GM10248 (cell line): ENCODE measurements at regions of chr1 and their contacts with region 1.

Region 1: GRCh38 chr1:174174461-174175329 is 15.4 kb downstream of the RABGAP1L start:
- DNase-seq: no peak
- CTCF ChIP-seq: no peak

Region 2: GRCh38 chr1:174159252-174160108 is 15.2 kb before region 1 on chr1 and contains the start of gene RABGAP1L:
- CTCF ChIA-PET with region 1: interaction called, 14 read pairs
- POLR2A ChIA-PET with region 1: no interaction called
- DNase-seq: peak; percentile 90
- CTCF ChIP-seq: no peak

Region 3: DNA sequence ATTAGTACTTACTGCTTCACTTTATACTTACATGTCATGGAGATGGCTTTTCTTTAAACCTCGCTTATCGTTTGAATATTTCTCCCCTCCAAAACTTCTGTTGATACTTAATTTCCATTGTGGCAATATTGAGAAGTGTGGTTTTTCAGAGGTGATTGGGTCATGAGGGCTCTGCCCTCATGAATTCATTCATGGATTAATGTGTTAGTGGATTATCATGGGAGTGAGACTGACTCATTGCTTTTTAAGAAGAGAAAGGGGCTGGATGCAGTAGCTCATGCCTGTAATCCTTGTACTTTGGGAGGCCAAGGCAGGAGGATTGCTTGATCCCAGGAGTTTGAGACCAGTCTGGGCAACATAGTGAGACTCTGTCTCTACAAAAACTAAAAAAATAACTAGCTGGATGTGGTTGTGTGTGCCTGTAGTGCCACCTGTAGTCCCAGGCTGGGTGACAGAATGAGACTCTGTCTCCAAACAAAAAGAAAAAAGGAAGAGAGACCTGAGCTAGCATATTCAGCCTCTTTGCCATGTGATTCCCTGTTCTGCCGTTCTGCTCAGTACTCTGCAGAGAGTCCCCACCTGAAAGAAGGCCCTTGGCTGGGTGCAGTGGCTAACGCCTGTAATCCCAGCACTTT is 14.8 kb after region 1 on chr1:
- CTCF ChIA-PET with region 1: interaction called, 11 read pairs
- POLR2A ChIA-PET with region 1: no interaction called
- DNase-seq: no peak
- CTCF ChIP-seq: no peak

Region 4: GRCh38 chr1:174230399-174230798 is 55.7 kb after region 1 on chr1:
- CTCF ChIA-PET with region 1: no interaction called
- POLR2A ChIA-PET with region 1: no interaction called
- DNase-seq: no peak
- CTCF ChIP-seq: no peak